Caco-2 (cell line): ENCODE measurements at regions of chr11 and their contacts with region 1.

Region 1: DNA sequence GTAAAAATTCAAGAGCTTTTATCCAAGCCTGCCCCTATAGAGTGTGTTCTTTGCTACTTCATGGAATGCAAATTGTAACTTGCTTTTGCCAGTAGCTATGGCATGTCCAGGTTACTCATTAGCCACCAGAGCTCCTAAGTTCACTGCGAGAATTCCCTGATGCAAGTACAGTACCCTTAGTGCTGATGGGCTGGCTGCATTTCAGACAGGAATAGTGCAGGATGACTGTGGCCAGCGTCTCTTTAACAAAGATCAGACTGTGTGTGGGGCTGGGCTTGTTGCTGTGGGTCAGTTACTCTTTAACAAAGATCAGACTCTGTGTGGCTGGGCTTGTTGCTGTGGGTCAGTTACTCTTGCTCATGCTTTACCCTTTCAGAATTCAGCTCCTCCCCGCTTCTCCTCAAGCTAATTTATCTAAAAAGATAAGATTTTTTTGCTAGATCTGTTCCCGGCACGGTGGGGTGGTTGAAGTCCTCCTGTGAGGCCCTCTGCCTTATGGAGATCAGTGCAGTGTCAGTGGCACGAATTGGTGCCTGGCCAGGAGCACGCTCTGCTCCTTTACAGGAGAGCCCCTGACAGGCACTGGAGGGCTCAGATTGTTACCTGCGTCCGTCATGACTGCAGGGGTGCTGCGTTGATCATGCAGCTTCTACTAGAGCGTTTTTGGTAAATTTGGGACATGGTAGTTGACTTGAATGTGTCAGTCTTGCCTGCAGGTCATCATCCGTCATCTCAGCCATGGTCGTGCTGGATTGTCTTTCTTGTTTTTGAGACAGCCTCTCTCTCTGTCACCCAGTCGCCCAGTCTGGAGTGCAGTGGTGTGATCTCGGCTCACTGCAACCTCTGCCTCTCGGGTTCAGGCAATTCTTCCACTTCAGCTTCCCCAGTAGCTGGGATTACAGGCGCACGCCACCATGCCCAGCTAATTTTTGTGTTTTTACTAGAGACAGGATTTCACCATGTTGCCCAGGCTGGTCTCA is 27.0 kb downstream of the AP2A2 start:
- DNase-seq: peak; percentile 92 to 96
- H3K4me3 ChIP-seq: peak overlapping the region; percentile 15
- H3K4me3 Mint-ChIP-seq: peak overlapping the region; percentile 55
- H3K27ac Mint-ChIP-seq: peak overlapping the region; percentile 78
- H3K4me1 ChIP-seq: peaks cover 74% of the 10 kb centered on the region
- H3K4me1 Mint-ChIP-seq: peaks cover 51% of the 10 kb centered on the region
- H3K27me3 ChIP-seq: no peaks in the 10 kb centered on the region
- H3K27me3 Mint-ChIP-seq: no peaks in the 10 kb centered on the region
- CTCF ChIP-seq: no peak

Region 2: DNA sequence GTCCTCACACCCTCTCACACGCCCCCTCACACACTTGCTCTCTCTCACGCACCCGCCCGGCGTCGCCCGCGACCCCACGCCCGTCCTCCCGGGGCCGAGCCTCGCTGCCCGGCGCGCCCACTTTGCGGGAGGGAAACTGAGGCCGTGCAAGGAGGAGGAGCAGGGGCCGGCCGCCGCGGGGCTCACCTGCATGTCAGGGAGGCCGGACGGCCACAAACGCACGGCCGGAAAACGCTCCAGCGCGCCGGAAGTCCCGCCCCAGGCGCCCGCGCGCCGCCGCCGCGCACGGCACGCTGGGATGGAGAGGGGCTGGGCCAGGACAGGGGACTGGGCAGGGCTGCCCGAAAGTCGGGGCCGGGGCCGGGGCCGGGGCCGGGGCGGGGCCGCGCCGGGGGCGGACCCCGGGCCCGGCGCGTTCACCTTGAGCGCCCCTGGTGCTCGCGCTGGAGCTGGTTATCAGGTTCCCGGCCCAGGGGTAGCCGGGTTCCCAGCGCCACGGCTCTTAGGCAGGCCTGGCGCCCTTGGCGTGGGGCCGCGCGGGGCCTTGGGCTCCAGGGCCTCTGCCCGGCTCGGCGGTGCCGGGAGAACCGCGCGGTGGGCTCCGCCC is 42.0 kb before region 1 on chr11 and contains the start of gene CHID1:
- CTCF ChIA-PET with region 1: interaction called, 6 read pairs
- POLR2A ChIA-PET with region 1: interaction called, 12 read pairs
- intact Hi-C with region 1: loop called (anchors 1 kb)
- DNase-seq: peak; percentile 90 to 96
- H3K4me3 ChIP-seq: peak within 1 kb of the TSS; percentile 100
- H3K4me3 Mint-ChIP-seq: peak within 1 kb of the TSS; percentile 84
- H3K27ac Mint-ChIP-seq: peak within 1 kb of the TSS; percentile 78
- H3K4me1 ChIP-seq: peaks cover 6% of the 10 kb centered on the region
- H3K4me1 Mint-ChIP-seq: peaks cover 6% of the 10 kb centered on the region
- H3K27me3 ChIP-seq: no peaks in the 10 kb centered on the region
- H3K27me3 Mint-ChIP-seq: no peaks in the 10 kb centered on the region
- CTCF ChIP-seq: peak in 1 of 2 experiments; percentile 15
- total RNA-seq, gene CHID1: 166 and 180 TPM in 2 replicates

Region 3: DNA sequence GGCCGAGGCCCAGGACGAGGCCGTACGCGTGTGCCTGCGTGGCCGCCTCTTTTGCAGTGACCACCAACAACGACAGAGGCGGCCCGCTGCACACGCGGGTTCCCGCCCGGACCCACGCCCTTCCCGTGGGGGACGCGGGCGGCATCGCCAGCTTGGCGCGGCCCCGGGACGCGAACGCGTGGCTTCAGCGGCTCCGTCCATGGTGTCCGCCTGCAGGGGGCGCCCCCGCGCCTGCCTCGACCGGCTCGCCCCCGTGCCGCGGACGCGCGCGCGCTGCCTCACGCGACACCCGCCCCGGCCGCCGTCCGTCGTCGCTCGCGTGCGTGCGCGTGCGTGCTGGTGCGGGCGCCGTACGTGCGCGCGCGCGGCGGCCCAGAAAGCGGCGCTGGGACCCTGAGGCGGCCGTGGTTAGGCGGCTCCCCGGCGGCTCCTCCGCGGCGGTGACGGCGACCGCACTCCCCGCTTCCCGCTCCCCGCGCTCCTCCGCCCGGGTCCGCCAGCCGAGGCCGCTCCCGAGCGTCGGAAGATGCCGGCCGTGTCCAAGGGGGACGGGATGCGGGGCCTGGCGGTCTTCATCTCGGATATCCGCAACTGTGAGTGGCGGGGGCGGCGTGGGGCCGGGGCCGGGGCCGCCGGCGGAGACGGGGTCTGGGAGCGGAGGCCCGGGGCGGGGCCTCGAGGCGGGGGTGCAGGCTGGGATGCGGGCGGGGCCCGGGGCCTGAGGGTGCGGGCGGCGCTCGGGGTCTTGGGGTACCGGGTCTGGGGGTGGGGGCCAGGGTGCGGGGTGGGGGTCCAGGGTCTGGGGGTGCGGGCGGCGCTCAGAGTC is 27.0 kb before region 1 on chr11 and contains the start of gene AP2A2:
- CTCF ChIA-PET with region 1: interaction called, 7 read pairs
- POLR2A ChIA-PET with region 1: no interaction called
- intact Hi-C with region 1: loop called (anchors 2 kb)
- DNase-seq: peak; percentile 83 to 95
- H3K4me3 ChIP-seq: peak within 1 kb of the TSS; percentile 52
- H3K4me3 Mint-ChIP-seq: peak within 1 kb of the TSS; percentile 89
- H3K27ac Mint-ChIP-seq: peak within 1 kb of the TSS; percentile 87
- H3K4me1 ChIP-seq: peaks cover 15% of the 10 kb centered on the region; the same call in 1 of the 2 replicates
- H3K4me1 Mint-ChIP-seq: peaks cover 6% of the 10 kb centered on the region
- H3K27me3 ChIP-seq: no peaks in the 10 kb centered on the region
- H3K27me3 Mint-ChIP-seq: no peaks in the 10 kb centered on the region
- CTCF ChIP-seq: peak; percentile 56 to 89
- total RNA-seq, gene AP2A2: 122 and 130 TPM in 2 replicates